Panc1 (cell line): ENCODE measurements at regions of chr5 and their contacts with region 1.

Region 1: DNA sequence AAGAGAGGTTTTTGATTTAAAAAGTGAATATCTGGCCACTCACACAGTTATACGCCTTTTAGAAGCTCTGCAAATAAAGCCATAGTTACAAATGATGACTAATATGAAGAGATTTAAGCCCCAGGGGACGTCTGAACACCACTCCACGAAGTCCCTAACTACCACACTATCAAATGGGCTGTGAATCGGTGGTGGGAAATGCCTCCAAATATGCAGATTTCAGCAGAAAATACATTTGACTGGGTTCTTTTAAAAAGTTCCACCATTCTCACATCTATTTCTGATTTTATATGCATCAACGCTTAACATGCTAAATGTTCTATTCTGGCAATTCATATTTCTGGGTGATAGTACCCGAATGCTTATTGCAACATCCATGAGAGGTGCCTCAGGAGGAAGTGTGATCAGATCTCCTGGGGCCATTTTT is 22.5 kb downstream of the TICAM2 start:
- DNase-seq: no peak
- ATAC-seq: no peak
- H3K4me3 ChIP-seq: no peak overlapping the region
- H3K27ac ChIP-seq: no peak overlapping the region
- H3K4me1 ChIP-seq: no peaks in the 10 kb centered on the region; the same call in 1 of the 2 replicates
- H3K27me3 ChIP-seq: no peaks in the 10 kb centered on the region
- CTCF ChIP-seq: no peak

Region 2: DNA sequence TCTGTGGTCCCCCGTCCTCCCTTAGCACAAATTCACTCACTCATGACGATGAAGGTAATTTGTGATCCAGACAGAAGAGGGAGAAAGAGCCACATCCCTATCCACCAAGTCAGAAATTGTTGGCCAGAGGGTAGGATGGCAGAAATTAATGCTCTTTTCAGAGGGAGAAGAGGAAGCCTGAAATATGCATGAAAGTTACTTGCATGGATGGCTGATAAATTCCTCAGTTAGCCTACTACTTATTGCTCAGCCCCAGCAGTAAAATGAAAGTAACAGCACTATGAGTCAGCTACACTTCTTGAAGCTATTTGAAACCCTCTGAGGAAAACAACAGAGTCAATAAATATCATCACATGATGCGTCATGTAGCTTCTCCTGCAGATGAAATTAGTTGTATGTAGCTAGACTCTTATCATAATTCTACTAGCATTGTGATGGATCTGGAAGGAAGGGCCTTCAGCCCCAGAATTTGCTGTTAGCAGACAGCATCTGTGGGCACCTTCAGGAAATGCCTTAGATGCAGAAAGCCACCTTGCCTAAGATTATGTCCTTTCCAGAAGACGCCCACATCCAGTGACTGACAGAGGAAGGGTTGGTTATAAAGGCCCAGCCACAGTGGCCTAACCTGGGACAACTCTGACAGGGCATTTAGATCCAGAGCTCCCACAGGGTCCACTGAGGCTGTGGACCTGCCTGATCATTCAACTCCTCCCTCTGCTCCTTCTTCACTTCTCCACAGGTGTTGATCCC is 202.1 kb before region 1 on chr5:
- CTCF ChIA-PET with region 1: interaction called, 14 read pairs
- POLR2A ChIA-PET with region 1: no interaction called
- in situ Hi-C with region 1: no loop called
- intact Hi-C with region 1: no loop called
- DNase-seq: peak; percentile 47
- ATAC-seq: no peak
- H3K4me3 ChIP-seq: no peak overlapping the region
- H3K27ac ChIP-seq: no peak overlapping the region
- H3K4me1 ChIP-seq: no peaks in the 10 kb centered on the region
- H3K27me3 ChIP-seq: no peaks in the 10 kb centered on the region
- CTCF ChIP-seq: peak; percentile 19; the same call in 1 of the 2 replicates